Activated CD4-positive, alpha-beta memory T cell treated with anti-CD3 and anti-CD28 coated beads for 36 hours (primary cell): ENCODE measurements at regions of chr2 and their contacts with region 1.

Region 1: GRCh38 chr2:7825591-7826312 is 856.1 kb upstream of the ID2 start:
- DNase-seq: peak; percentile 87
- H3K4me3 Mint-ChIP-seq: no peak overlapping the region
- H3K27ac Mint-ChIP-seq: peak overlapping the region; percentile 89
- H3K4me1 Mint-ChIP-seq: peaks cover 34% of the 10 kb centered on the region
- H3K27me3 Mint-ChIP-seq: peaks cover 3% of the 10 kb centered on the region

Region 2: DNA sequence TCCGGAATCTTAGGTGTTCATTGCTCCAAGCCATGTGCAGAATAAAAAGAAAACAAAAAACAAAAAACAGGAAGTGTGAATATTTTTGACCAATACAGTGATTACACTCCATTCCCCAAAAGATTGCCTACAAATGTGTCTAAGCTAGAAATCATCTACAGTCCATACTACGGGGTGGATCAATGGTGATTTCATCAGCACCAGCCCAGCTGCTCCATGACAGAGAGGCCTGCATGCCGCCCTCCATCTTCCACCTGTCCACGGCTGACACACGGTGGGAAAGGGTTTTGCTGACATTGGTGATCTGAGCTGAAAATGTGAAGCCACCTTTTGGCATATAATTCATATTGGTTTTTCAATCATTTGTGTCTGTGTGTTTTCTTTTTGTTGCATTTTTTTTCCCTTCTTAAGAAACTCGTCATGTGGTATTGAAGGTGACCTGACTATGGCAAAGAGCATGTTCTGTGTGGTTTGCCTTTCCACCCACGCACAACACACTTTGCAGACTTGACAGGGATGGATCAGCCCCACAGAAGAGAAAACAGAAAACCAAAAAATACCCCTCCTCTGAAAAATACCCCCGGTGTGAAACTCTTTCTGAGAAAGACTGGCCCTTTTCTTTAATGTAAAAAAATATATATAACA is 375.4 kb before region 1 on chr2:
- CTCF ChIA-PET with region 1: no interaction called
- POLR2A ChIA-PET with region 1: no interaction called
- intact Hi-C with region 1: loop called (anchors 2 kb)
- DNase-seq: peak; percentile 84
- H3K4me3 Mint-ChIP-seq: peak overlapping the region; percentile 47
- H3K27ac Mint-ChIP-seq: peak overlapping the region; percentile 89
- H3K4me1 Mint-ChIP-seq: peaks cover 68% of the 10 kb centered on the region
- H3K27me3 Mint-ChIP-seq: no peaks in the 10 kb centered on the region

Region 3: GRCh38 chr2:7725171-7725849 is 100.4 kb before region 1 on chr2:
- CTCF ChIA-PET with region 1: interaction called, 4 read pairs
- POLR2A ChIA-PET with region 1: interaction called, 3 read pairs
- intact Hi-C with region 1: loop called (anchors 1 kb)
- DNase-seq: peak; percentile 46
- H3K4me3 Mint-ChIP-seq: peak overlapping the region; percentile 68
- H3K27ac Mint-ChIP-seq: peak overlapping the region; percentile 80
- H3K4me1 Mint-ChIP-seq: peaks cover 36% of the 10 kb centered on the region
- H3K27me3 Mint-ChIP-seq: no peaks in the 10 kb centered on the region

Region 4: GRCh38 chr2:7773362-7774360 is 52.1 kb before region 1 on chr2:
- CTCF ChIA-PET with region 1: interaction called, 7 read pairs
- POLR2A ChIA-PET with region 1: interaction called, 3 read pairs
- intact Hi-C with region 1: loop called (anchors 1 kb)
- DNase-seq: peak; percentile 65
- H3K4me3 Mint-ChIP-seq: no peak overlapping the region
- H3K27ac Mint-ChIP-seq: peak overlapping the region; percentile 66
- H3K4me1 Mint-ChIP-seq: peaks cover 33% of the 10 kb centered on the region
- H3K27me3 Mint-ChIP-seq: peaks cover 12% of the 10 kb centered on the region

Region 5: GRCh38 chr2:7938371-7938770 is 112.6 kb after region 1 on chr2:
- CTCF ChIA-PET with region 1: no interaction called
- POLR2A ChIA-PET with region 1: no interaction called
- intact Hi-C with region 1: loop called (anchors 2 kb)
- DNase-seq: no peak
- H3K4me3 Mint-ChIP-seq: no peak overlapping the region
- H3K27ac Mint-ChIP-seq: no peak overlapping the region
- H3K4me1 Mint-ChIP-seq: peaks cover 22% of the 10 kb centered on the region
- H3K27me3 Mint-ChIP-seq: peaks cover 6% of the 10 kb centered on the region

Region 6: GRCh38 chr2:8408560-8409460 is 583.1 kb after region 1 on chr2:
- CTCF ChIA-PET with region 1: no interaction called
- POLR2A ChIA-PET with region 1: no interaction called
- intact Hi-C with region 1: loop called (anchors 2 kb)
- DNase-seq: peak; percentile 91
- H3K4me3 Mint-ChIP-seq: peak overlapping the region; percentile 0
- H3K27ac Mint-ChIP-seq: peak overlapping the region; percentile 79
- H3K4me1 Mint-ChIP-seq: peaks cover 34% of the 10 kb centered on the region
- H3K27me3 Mint-ChIP-seq: no peaks in the 10 kb centered on the region

Region 7: DNA sequence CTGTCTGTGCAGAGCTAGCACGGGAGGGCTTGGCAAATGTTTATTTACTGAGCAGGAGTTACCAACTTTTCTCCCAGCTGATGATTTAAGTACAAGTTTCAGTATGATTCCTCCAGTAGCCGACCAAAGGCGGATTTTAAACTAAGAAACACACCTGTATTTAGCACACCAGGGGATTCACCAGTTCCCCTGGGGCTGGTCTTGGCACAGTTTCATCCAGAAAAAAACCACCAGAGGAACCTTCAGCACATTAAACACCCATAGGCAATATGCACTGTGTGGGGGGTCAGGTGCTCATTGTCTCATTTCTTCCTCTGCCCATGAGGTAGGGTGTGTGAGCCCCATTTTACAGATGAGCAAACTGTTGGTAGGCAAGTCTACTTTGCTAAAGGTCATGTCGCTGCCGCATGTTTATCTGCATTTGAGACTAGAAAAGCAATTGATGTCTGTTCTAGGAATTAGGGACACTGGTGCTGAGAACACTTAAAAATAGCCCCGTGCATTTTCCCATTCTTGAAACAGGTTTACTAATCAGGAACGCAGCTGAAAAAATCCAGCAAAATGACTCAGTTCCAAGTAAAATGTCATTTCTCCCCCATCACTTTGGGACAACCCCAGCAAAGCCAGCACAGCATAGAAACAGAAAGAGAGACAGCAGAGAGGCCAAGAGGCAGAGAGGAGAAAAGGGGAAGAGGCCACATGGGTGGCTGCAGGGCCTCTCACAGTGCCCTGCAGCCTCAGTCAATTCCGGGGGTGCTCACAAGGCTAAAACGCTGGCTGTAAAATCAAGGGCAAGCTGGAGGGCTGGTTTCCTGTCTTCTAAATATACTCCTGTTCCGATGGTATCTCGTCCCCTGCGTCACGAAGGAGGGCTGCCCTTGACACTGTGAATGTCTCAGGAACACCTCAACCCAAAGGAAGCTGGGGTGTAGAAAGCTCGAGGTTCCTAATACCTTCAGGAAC is 689.3 kb after region 1 on chr2:
- CTCF ChIA-PET with region 1: no interaction called
- POLR2A ChIA-PET with region 1: no interaction called
- intact Hi-C with region 1: loop called (anchors 1 kb)
- DNase-seq: peak; percentile 82
- H3K4me3 Mint-ChIP-seq: peak overlapping the region; percentile 59
- H3K27ac Mint-ChIP-seq: peak overlapping the region; percentile 98
- H3K4me1 Mint-ChIP-seq: peaks cover 66% of the 10 kb centered on the region
- H3K27me3 Mint-ChIP-seq: no peaks in the 10 kb centered on the region